Activated CD4-positive, alpha-beta memory T cell treated with anti-CD3 and anti-CD28 coated beads, Interleukin-2, amount 10 ng/mL, durations not matched to agents 7 days and 5 days (primary cell): ENCODE measurements at regions of chr4 and their contacts with region 1.

Region 1: GRCh38 chr4:7067452-7068278 is at the start of gene GRPEL1:
- DNase-seq: peak; percentile 100
- H3K4me3 Mint-ChIP-seq: peak within 1 kb of the TSS; percentile 90
- H3K27ac Mint-ChIP-seq: peak within 1 kb of the TSS; percentile 88
- H3K4me1 Mint-ChIP-seq: peaks cover 54% of the 10 kb centered on the region
- H3K27me3 Mint-ChIP-seq: peaks cover 14% of the 10 kb centered on the region
- total RNA-seq, gene GRPEL1: 39.8 to 40.0 TPM

Region 2: GRCh38 chr4:6673660-6674499 is 393.8 kb before region 1 on chr4:
- CTCF ChIA-PET with region 1: interaction called, 4 read pairs
- POLR2A ChIA-PET with region 1: interaction called, 30 read pairs
- DNase-seq: peak; percentile 95
- H3K4me3 Mint-ChIP-seq: peak overlapping the region; percentile 97
- H3K27ac Mint-ChIP-seq: peak overlapping the region; percentile 96
- H3K4me1 Mint-ChIP-seq: peaks cover 48% of the 10 kb centered on the region
- H3K27me3 Mint-ChIP-seq: no peaks in the 10 kb centered on the region

Region 3: DNA sequence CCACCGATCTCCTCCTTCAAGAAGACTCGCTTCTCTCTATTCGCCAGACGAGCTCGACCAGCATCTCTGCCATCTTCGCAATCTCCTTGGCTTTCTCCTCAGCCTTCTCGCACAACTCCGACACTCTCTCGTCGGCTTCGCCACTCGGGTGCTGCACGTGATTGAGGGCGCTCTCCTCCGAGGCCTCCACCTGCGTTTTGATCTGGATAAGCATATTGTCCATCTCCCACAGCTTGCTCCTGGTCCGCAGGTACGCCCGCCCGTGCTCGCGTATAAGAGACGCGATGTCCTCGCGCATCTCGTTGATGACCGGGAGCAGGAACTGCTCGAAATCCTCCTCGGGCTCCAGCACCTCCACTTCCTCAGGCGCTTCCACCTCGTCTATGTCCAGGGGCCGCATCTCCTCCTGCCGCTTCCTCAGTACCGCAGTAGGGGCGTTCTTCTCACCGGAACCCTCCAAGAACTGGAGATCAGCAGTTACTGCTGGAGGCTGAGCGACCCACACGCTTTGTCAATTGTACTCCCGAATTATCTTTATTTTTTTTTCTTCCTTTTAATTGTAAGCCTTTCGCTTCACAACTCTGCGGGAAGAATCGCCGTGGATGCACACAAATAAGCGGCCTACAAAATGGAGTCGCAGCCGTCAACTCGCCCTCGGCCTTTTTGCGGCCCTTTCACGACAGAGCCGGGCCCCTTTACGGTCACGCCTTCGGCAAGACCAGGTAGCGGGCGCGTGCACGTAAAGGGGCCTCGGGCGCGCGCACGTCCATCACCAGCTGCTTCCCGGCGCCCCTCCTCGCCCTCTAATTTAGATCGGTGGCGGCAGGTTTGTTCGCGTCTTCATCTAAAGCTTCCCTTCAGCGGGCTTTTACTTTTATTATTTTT is 358.2 kb before region 1 on chr4 and contains the start of gene MRFAP1L1:
- CTCF ChIA-PET with region 1: interaction called, 3 read pairs
- POLR2A ChIA-PET with region 1: interaction called, 21 read pairs
- DNase-seq: peak; percentile 98
- H3K4me3 Mint-ChIP-seq: peak within 1 kb of the TSS; percentile 99
- H3K27ac Mint-ChIP-seq: peak within 1 kb of the TSS; percentile 97
- H3K4me1 Mint-ChIP-seq: peaks cover 49% of the 10 kb centered on the region
- H3K27me3 Mint-ChIP-seq: no peaks in the 10 kb centered on the region
- total RNA-seq, gene MRFAP1L1: 81.9 to 83.1 TPM

Region 4: GRCh38 chr4:6909073-6909965 is 158.3 kb before region 1 on chr4 and contains the start of gene TBC1D14:
- CTCF ChIA-PET with region 1: interaction called, 5 read pairs
- POLR2A ChIA-PET with region 1: interaction called, 21 read pairs
- DNase-seq: peak; percentile 88
- H3K4me3 Mint-ChIP-seq: peak within 1 kb of the TSS; percentile 91
- H3K27ac Mint-ChIP-seq: peak within 1 kb of the TSS; percentile 85
- H3K4me1 Mint-ChIP-seq: peaks cover 64% of the 10 kb centered on the region
- H3K27me3 Mint-ChIP-seq: peaks cover 2% of the 10 kb centered on the region
- total RNA-seq, gene TBC1D14: 53.7 to 55.3 TPM

Region 5: DNA sequence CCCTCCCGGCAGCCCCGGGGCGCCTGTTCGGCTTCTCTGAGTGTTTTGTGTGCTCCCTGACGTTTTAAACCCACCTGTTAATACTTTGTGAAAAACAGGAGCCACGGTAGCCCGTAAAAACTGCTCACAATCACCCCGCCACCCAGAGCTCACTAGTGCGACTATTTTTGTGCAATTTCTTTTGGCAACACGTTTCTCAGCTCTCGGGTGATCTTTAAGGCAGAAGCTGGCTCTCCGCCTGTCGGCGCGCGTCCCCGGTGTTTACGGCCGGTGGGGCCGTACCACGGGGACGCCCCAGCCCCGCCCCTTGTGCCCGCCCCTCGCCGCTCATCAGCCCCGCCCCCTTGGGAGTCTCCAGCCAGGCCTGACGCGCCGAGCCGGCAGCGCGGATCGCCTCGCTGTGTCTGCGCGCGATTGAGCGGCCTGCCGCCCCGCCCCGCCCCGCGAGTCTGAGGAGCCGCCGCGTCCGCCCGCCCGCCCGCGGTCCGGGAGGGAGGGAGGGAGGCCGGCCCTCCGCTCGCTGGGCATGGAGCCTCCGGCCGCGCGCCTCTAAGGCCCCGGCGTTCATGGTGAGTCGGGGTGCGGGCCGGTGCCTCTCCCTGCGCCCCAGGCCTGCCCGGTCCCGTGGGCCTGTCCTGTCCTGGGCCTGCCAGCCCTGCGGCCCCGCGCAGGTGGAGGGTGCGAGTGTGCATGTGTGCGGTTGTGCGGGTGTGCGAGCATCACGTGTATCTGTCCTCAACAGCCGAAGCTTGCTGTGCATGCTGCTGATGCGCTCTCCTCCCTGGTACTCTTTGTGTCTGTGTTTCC is 80.7 kb before region 1 on chr4:
- CTCF ChIA-PET with region 1: interaction called, 10 read pairs
- POLR2A ChIA-PET with region 1: interaction called, 38 read pairs
- DNase-seq: peak; percentile 95
- H3K4me3 Mint-ChIP-seq: peak overlapping the region; percentile 98
- H3K27ac Mint-ChIP-seq: peak overlapping the region; percentile 95
- H3K4me1 Mint-ChIP-seq: peaks cover 81% of the 10 kb centered on the region
- H3K27me3 Mint-ChIP-seq: no peaks in the 10 kb centered on the region

Region 6: DNA sequence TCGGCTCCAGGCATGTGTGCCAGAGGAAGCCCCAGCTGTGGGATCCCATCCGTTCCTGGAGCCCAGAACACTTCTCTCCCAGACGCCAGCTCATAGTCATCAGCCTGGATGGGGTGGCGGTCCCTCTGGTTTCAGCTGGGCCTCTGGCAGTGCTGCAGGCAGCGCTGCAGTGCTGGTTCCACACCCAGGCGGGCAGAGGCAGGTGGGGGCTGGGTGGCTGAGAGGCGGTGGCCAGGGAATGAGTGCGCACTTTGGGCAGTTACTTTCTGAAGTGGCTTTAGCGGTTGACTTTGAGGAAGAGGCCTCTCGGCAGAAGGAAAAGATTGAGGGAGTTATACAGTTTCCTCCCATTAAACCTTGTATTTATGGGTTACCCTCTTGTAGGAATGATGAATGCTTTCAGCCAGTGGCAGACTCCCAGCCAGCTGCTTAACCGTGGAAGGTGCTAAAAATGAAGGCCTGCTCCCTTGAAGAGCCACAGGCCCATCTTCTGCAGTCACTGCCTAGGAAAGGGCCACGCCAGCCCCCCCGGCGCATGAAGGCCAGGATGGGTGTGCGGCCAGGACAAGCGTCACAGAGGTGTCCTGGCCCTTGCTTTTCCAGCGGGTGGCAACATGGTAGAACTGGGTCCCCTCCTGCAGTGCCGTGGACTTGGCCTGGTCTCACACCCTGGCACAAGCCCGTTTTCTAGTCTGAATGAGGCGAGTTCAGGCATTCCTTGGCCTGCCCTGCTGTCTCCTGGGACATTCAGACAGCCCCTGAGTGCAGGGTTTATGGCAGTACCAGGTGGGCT is 14.5 kb before region 1 on chr4:
- CTCF ChIA-PET with region 1: interaction called, 7 read pairs
- POLR2A ChIA-PET with region 1: interaction called, 187 read pairs
- DNase-seq: no peak
- H3K4me3 Mint-ChIP-seq: no peak overlapping the region
- H3K27ac Mint-ChIP-seq: peak overlapping the region; percentile 44
- H3K4me1 Mint-ChIP-seq: peaks cover 36% of the 10 kb centered on the region
- H3K27me3 Mint-ChIP-seq: no peaks in the 10 kb centered on the region

Region 7: GRCh38 chr4:7108660-7109059 is 41.0 kb after region 1 on chr4:
- CTCF ChIA-PET with region 1: no interaction called
- POLR2A ChIA-PET with region 1: no interaction called
- DNase-seq: no peak
- H3K4me3 Mint-ChIP-seq: no peak overlapping the region
- H3K27ac Mint-ChIP-seq: no peak overlapping the region
- H3K4me1 Mint-ChIP-seq: no peaks in the 10 kb centered on the region
- H3K27me3 Mint-ChIP-seq: peaks cover 9% of the 10 kb centered on the region